Activated CD4-positive, alpha-beta memory T cell treated with anti-CD3 and anti-CD28 coated beads, Interleukin-2, amount 10 ng/mL, durations not matched to agents 7 days and 5 days (primary cell): ENCODE measurements at regions of chr17 and their contacts with region 1.

Region 1: GRCh38 chr17:50094753-50095619 is at the start of gene PDK2:
- DNase-seq: peak; percentile 98
- H3K4me3 Mint-ChIP-seq: peak within 1 kb of the TSS; percentile 79
- H3K27ac Mint-ChIP-seq: peak within 1 kb of the TSS; percentile 76
- H3K4me1 Mint-ChIP-seq: peaks cover 19% of the 10 kb centered on the region
- H3K27me3 Mint-ChIP-seq: no peaks in the 10 kb centered on the region
- total RNA-seq, gene PDK2: 19.6 to 23.4 TPM

Region 2: DNA sequence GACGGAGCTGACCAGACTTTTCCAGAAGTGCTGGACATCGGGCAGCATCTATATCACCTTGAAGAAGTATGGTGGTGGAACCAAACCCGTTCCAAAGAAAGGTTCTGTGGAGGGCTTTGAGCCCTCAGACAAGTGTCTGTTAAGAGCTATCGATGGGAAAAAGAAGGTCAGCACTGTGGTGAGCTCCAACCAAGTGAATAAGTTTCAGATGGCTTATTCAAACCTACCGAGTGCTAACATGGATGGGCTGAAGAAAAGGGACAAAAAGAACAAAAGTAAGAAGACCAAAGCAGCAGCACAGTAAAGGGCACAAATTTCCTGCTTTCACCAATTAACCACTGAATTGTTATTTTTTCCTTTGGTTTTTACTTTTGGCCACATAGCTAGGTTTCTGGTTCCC is 299.6 kb before region 1 on chr17:
- CTCF ChIA-PET with region 1: no interaction called
- POLR2A ChIA-PET with region 1: no interaction called
- DNase-seq: no peak
- H3K4me3 Mint-ChIP-seq: no peak overlapping the region
- H3K27ac Mint-ChIP-seq: peak overlapping the region; percentile 74
- H3K4me1 Mint-ChIP-seq: peaks cover 67% of the 10 kb centered on the region
- H3K27me3 Mint-ChIP-seq: no peaks in the 10 kb centered on the region

Region 3: DNA sequence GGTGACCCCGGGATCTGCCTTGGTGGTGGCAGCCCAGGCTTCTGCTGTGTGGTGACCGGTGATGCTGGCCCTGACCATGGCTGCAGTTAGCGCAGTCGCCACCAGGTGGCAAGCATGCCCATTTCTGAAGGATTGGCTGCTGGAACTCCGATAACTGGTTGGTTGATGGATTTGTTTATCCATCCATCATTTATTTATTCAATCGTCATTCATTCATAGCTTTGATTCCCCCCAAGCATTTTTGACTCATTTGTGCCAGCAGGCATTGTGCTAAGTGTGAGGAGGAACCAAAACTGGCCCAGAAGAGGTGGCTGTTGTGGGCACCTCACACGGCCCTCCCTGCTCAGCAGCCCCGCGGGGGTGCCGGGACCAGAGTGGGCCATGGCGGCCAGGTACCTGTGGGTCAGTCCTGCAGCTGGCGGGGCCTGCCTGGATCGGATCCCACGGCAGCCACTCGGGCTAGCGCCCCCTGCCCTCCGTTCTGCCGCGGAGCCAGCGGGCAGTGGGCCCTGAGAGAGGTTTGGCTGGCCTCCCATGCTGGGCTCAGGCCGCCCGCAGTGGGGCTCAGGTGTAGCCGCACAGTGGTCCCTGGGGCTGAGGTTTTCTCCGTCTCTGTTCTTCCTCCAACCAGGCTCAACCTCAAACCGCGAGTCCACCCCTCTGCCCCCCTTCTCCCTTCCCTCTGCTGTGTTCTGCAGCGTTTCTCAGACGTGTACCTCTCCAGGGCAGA is 67.9 kb before region 1 on chr17:
- CTCF ChIA-PET with region 1: interaction called, 32 read pairs
- POLR2A ChIA-PET with region 1: no interaction called
- DNase-seq: peak; percentile 80
- H3K4me3 Mint-ChIP-seq: no peak overlapping the region
- H3K27ac Mint-ChIP-seq: no peak overlapping the region
- H3K4me1 Mint-ChIP-seq: peaks cover 19% of the 10 kb centered on the region
- H3K27me3 Mint-ChIP-seq: peaks cover 25% of the 10 kb centered on the region

Region 4: DNA sequence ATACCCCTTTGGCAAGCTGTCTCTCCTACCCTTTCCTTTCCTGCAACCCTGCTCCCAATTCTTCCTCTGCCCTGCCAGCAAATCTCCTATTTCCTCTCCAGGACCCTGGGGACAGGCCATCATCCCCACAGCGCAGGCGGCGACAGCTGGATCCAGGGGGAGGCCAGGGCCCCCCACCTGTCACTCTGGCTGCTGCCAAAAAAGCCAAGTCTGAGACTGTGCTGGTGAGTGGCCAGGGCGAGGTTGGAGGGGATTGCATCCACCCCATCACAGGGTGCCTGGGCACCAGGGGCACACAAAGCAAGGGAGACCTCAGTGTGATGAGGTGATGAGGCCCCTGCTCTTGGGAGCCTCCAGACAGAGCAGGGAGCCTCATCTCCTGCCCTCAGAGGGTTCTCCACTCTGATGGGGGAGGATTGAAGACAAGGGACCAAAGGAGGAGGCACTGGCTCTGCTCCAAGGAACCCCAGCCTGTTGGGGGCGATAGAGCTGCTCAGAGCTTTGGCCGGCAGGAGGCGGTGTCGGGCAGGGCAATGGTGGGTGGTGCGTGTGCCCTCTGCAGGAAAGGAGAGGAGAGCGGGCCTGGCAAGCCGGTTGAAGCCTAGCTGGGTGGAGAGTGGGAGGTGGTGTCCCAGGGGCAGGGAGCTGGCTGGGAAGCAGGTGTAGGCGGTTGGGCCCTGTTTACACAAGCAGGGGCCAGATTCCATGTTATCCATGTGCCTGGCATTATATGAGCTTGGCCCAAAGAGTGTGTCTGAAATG is 15.5 kb before region 1 on chr17:
- CTCF ChIA-PET with region 1: interaction called, 26 read pairs
- POLR2A ChIA-PET with region 1: no interaction called
- DNase-seq: peak; percentile 38
- H3K4me3 Mint-ChIP-seq: no peak overlapping the region
- H3K27ac Mint-ChIP-seq: no peak overlapping the region
- H3K4me1 Mint-ChIP-seq: no peaks in the 10 kb centered on the region
- H3K27me3 Mint-ChIP-seq: no peaks in the 10 kb centered on the region

Region 5: GRCh38 chr17:50129728-50130558 is 35.0 kb after region 1 on chr17 and contains the start of gene SAMD14:
- CTCF ChIA-PET with region 1: interaction called, 14 read pairs
- POLR2A ChIA-PET with region 1: no interaction called
- DNase-seq: peak; percentile 50
- H3K4me3 Mint-ChIP-seq: peak within 1 kb of the TSS; percentile 71
- H3K27ac Mint-ChIP-seq: peak within 1 kb of the TSS; percentile 45
- H3K4me1 Mint-ChIP-seq: peaks cover 38% of the 10 kb centered on the region
- H3K27me3 Mint-ChIP-seq: peaks cover 37% of the 10 kb centered on the region
- total RNA-seq, gene SAMD14: 0.68 to 1.3 TPM

Region 6: DNA sequence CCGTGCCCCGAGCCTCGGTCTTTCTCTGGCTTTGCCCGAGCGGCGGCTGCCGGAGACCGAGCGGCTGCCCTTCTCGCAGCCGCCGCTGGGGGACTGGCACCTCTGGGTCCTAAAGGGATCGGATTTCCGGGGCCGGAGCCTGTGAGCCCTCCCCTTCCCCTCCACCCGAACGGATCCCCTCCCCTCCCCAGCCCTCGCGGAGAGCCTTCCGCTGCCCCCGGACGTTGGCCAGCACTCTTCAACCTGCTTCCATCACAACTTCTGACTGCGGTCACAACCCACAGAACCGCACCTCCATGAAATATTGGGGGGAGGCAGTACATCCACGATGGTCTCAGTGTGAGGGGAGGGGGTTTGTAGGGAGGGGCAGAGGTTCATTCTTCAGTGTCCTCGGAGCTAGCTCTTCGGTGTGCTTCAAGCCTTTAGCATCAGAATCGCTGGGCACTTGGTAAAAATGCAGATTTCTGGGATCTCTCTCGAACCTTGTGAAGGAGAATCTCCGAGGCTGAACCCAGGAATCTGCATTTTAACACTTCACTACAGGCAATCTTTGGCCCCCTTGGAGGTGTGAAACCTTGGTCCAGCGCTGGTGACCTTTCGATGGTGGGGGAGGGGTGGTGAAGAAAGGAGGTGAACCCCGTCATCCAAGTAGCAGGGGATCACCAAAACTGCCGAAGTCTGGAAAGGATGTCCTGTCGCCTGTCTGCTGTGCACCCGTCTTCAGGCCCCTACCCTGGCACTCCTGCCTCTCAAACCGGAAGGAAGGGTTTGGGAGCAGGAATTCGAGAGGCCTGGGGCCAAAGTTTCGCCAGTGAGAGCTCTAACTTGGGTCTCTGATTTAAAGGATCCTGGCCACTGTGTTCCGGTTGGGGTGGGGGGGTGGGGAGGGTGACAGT is 56.3 kb after region 1 on chr17:
- CTCF ChIA-PET with region 1: interaction called, 18 read pairs
- POLR2A ChIA-PET with region 1: interaction called, 3 read pairs
- DNase-seq: peak; percentile 93
- H3K4me3 Mint-ChIP-seq: peak overlapping the region; percentile 83
- H3K27ac Mint-ChIP-seq: peak overlapping the region; percentile 95
- H3K4me1 Mint-ChIP-seq: peaks cover 40% of the 10 kb centered on the region
- H3K27me3 Mint-ChIP-seq: no peaks in the 10 kb centered on the region

Region 7: GRCh38 chr17:50269477-50270434 is 174.8 kb after region 1 on chr17:
- CTCF ChIA-PET with region 1: interaction called, 15 read pairs
- POLR2A ChIA-PET with region 1: no interaction called
- DNase-seq: peak; percentile 76
- H3K4me3 Mint-ChIP-seq: no peak overlapping the region
- H3K27ac Mint-ChIP-seq: no peak overlapping the region
- H3K4me1 Mint-ChIP-seq: peaks cover 18% of the 10 kb centered on the region
- H3K27me3 Mint-ChIP-seq: peaks cover 9% of the 10 kb centered on the region